OCI-LY7 (cell line): ENCODE measurements at regions of chr12 and their contacts with region 1.

Region 1: GRCh38 chr12:44837110-44837755 is 38.9 kb downstream of the NELL2 start:
- DNase-seq: no peak
- H3K4me3 ChIP-seq: no peak overlapping the region
- H3K27ac ChIP-seq: no peak overlapping the region
- H3K4me1 ChIP-seq: peaks cover 2% of the 10 kb centered on the region
- CTCF ChIP-seq: no peak

Region 2: DNA sequence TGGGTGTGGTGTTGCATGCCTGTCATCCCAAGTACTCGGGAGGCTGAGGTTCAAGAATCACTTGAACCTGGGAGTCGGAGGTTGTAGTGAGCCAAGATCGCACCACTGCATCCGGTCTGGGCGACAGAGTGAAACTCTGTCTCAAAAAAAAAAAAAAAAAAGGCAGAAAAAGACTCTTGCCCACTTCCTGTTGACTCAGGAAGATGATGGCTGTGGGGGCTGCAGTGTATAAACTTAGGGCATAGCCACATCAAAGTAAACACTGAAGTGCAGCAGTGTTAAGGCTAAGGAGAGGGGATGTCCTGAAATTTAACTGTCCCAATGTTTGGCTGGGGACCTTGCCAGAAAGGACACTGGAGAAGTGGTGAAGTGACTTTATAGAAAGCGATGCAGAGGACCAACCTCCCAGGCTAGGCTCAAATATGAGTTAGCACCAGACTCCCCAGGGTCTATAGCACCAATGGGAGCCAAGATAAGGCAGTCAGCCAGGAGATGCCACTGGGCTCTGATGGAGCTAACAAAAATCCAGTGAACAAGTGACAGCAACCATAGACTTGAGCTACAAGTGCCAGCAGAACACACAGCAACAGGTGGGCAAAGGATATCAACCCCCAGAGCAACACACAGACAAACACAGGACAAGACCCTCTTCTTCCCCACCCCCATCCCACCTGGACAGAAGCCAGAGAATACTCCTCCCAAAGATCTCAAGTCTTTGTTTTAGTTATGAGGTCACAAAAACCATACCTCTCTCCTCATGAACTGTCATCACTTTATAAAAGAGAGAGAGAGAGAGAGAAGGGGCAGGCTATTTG is 10.9 kb after region 1 on chr12:
- CTCF ChIA-PET with region 1: no interaction called
- POLR2A ChIA-PET with region 1: interaction called, 13 read pairs
- intact Hi-C with region 1: no loop called
- DNase-seq: peak; percentile 90
- H3K4me3 ChIP-seq: peak overlapping the region; percentile 55
- H3K27ac ChIP-seq: peak overlapping the region; percentile 97
- H3K4me1 ChIP-seq: peaks cover 56% of the 10 kb centered on the region
- CTCF ChIP-seq: no peak